BJ (cell line): ENCODE measurements at regions of chr5 and their contacts with region 1.

Region 1: DNA sequence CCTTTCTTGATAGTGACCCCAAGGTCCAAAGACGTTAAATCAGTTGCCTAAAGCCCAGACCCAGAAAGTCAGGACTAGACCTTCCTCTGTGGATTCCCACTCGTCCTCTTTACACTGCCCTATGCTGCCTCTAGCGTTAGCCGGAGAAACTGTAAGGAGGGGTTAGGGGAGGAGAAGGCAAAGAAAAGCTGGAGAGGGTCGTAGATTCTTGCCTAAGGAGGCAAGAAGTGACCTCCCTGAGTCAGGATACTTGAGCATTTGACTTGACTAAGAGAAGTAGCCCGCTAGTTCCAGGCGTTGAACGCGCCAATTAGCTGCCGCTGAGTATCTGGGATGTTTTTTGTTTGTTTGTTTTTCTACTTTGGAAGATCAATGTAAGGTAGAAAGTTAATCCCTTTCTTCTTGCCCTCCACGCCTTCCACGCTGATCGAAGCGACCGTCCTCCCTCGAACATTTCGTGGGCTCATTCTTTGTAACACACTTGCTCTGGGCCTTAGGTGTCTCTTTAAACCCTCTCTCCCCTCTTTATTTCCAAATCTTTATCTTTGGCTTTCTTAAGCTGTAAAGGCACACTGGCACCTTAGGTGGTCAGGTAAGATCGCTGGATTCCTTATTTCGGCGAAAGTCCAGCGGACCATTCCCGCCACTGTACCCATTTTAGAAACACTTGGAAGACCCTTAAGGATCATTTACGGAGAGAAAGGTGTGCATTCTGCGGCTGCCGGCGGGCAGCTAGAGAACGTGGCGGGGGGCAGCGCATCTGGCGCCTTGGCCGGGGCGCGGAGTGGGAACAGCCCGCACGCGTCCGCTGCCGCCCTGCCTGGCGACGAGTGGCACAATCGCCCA is 5.1 kb upstream of the RGMB start:
- DNase-seq: no peak
- H3K4me3 ChIP-seq: peak overlapping the region; percentile 84
- H3K27me3 ChIP-seq: no peaks in the 10 kb centered on the region
- CTCF ChIP-seq: peak; percentile 96

Region 2: DNA sequence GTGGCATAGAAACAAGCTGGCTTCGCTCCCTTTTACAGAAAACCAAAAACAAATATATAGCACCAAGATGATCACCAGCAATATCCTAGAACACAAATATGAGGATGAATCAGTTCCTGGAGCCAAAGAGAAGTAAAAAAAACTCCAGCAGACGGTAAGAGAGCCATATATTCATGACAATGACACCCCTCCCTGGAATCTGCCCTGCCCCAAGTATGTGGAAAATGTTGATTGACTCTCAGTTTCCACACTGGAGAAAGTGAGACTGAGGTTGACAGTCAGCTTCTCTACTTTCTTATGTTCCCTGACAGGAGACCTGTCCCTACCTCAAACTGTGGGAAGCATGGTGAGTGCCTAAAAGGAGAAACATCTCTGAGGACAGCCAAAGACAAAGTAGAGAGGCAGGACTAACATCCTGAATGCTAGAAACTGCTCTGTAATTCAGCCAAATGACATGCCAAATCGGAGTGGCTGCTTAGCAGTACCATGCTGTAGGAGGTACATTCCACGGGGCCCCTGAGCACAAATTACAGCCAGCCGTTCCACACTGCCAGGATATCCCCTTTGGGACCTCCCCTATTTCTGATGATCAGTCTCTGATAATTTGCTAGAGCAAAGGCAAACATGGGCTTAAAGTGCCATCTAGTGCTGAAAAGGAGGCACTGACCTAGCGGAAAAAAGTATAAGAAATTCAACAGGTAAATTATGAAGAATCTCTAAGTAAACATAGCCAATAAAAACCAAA is 419.0 kb before region 1 on chr5:
- CTCF ChIA-PET with region 1: interaction called, 12 read pairs
- POLR2A ChIA-PET with region 1: no interaction called
- DNase-seq: peak; percentile 53
- H3K4me3 ChIP-seq: no peak overlapping the region
- H3K27me3 ChIP-seq: no peaks in the 10 kb centered on the region
- CTCF ChIP-seq: peak; percentile 62

Region 3: DNA sequence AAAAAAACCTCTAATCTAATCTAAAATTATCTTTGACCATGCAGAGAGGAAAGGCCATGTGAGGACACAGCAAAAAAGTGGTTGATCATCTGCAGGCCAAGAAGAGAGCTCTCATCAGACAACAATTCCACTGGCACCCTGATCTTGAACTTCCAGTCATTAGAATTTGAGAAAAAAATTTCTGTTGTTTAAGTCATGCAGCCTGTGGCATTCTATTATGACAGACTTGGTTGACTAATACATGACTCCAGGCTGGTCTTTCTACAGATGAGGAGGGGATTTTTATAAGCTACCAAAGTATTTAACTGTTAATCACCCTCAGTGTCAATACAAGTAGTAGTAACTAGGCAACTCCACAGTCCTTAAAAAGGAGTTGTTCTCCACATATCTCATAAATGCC is 353.4 kb before region 1 on chr5:
- CTCF ChIA-PET with region 1: interaction called, 70 read pairs
- POLR2A ChIA-PET with region 1: interaction called, 5 read pairs
- DNase-seq: peak; percentile 99
- H3K4me3 ChIP-seq: no peak overlapping the region
- H3K27me3 ChIP-seq: no peaks in the 10 kb centered on the region
- CTCF ChIP-seq: no peak

Region 4: GRCh38 chr5:98454904-98455303 is 313.5 kb before region 1 on chr5:
- CTCF ChIA-PET with region 1: interaction called, 69 read pairs
- POLR2A ChIA-PET with region 1: interaction called, 6 read pairs
- DNase-seq: peak; percentile 88
- H3K4me3 ChIP-seq: peak overlapping the region; percentile 7; the same call in 1 of the 2 replicates
- H3K27me3 ChIP-seq: no peaks in the 10 kb centered on the region
- CTCF ChIP-seq: peak; percentile 37

Region 5: GRCh38 chr5:99141534-99142128 is 373.2 kb after region 1 on chr5:
- CTCF ChIA-PET with region 1: no interaction called
- POLR2A ChIA-PET with region 1: no interaction called
- DNase-seq: no peak
- H3K4me3 ChIP-seq: no peak overlapping the region
- H3K27me3 ChIP-seq: no peaks in the 10 kb centered on the region
- CTCF ChIP-seq: no peak